Activated CD4-positive, alpha-beta T cell treated with anti-CD3 and anti-CD28 coated beads, Interleukin-2, amount 10 ng/mL, durations not matched to agents 24 days and 14 days (primary cell): ENCODE measurements at regions of chr6 and their contacts with region 1.

Region 1: DNA sequence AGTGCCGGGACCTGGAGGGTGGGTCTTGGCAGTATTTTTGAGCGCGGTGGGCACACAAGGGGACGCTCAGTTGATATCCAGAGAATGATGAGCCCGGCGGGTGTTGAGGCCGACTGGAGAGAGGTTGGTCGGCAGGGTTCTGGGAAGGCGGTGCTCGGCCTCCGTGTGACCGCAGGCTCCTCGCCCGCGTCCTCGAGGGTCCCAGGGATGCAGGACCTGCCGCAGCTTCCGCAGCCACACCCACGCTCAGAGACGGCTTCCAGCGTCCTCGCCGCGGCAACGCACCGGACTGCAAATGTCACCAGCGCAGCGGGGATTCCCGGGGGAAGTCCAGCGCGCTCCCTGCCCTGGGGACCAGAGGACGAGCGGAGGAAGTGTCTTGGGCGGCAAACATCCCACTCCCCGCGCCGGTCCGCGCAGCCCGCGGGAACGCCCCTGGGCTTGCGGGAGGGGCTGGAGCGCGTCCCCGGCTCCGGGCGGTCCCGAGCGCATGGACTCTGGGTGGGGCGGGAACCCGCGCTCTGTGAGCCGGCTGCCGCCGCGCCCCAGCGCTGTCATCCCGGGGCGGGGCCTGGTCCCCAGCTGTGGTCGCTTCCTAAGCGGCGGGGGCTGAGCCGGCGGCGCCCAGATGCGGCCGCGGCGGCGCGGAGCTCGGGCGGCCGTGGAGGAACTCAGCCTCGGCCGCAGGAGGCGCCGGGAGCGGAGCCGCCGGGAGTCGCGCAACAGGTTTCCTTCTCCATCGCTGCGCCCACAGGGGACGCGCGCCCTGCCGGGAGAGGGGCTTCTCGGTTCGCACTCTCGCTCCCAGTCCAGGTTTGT is at the start of gene STX11:
- DNase-seq: peak; percentile 95
- H3K4me3 Mint-ChIP-seq: peak within 1 kb of the TSS; percentile 89
- H3K27ac Mint-ChIP-seq: peak within 1 kb of the TSS; percentile 96
- H3K4me1 Mint-ChIP-seq: peaks cover 41% of the 10 kb centered on the region
- H3K27me3 Mint-ChIP-seq: no peaks in the 10 kb centered on the region
- total RNA-seq, gene STX11: 15.5 and 15.6 TPM in 2 replicates

Region 2: DNA sequence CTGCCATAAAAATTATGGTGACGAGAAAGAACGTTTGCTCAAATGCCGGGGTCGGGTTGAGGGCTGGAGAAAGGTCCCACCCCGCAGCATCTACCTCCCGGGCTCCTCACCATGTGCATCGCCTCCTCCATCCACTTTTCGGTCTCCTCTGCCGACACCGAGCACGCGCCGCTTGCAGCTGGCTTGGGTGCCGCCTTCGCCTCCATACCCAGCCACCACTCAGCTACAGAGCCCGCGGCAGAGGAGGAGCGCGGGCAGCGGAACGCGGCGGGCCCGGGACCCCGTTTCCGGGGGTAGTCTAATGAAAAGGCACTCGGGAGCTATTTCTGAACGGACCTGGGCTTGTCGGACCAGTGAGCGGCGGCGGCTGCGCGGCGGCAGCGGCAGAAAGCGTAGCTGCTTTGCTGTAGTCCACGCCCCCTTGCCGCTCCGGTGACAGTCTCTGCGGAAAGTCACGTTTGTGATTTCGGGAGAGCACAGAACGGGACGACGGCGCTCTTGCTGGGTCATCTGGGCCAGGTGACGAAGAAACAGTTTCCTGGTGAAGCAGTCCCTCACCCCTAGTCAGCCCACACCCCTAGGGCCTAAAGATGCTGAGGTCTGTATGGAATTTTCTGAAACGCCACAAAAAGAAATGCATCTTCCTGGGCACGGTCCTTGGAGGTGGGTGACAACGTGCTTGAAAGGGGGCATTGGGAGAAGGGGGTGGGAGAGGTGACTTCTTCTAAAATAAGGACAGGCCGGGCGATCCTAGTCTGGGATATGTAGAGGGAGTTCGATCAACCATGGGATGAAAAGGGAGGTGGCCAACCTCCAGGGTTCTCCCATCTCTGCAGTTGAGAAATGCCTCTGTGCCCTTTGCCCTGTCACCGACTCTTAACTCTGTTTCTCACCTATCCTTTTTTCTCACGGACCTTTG is 699.4 kb before region 1 on chr6 and contains the starts of genes ADAT2 and PEX3:
- intact Hi-C with region 1: loop called (anchors 5 kb)
- DNase-seq: peak; percentile 98
- H3K4me3 Mint-ChIP-seq: peak within 1 kb of the TSS; percentile 91
- H3K27ac Mint-ChIP-seq: peak within 1 kb of the TSS; percentile 99
- H3K4me1 Mint-ChIP-seq: peaks cover 36% of the 10 kb centered on the region
- H3K27me3 Mint-ChIP-seq: no peaks in the 10 kb centered on the region
- total RNA-seq, gene ADAT2: 46.0 and 47.7 TPM in 2 replicates
- total RNA-seq, gene PEX3: 26.0 and 28.5 TPM in 2 replicates

Region 3: GRCh38 chr6:143679041-143679440 is 471.1 kb before region 1 on chr6:
- intact Hi-C with region 1: no loop called
- DNase-seq: no peak
- H3K4me3 Mint-ChIP-seq: peak overlapping the region; percentile 84
- H3K27ac Mint-ChIP-seq: no peak overlapping the region
- H3K4me1 Mint-ChIP-seq: peaks cover 15% of the 10 kb centered on the region
- H3K27me3 Mint-ChIP-seq: peaks cover 46% of the 10 kb centered on the region

Region 4: DNA sequence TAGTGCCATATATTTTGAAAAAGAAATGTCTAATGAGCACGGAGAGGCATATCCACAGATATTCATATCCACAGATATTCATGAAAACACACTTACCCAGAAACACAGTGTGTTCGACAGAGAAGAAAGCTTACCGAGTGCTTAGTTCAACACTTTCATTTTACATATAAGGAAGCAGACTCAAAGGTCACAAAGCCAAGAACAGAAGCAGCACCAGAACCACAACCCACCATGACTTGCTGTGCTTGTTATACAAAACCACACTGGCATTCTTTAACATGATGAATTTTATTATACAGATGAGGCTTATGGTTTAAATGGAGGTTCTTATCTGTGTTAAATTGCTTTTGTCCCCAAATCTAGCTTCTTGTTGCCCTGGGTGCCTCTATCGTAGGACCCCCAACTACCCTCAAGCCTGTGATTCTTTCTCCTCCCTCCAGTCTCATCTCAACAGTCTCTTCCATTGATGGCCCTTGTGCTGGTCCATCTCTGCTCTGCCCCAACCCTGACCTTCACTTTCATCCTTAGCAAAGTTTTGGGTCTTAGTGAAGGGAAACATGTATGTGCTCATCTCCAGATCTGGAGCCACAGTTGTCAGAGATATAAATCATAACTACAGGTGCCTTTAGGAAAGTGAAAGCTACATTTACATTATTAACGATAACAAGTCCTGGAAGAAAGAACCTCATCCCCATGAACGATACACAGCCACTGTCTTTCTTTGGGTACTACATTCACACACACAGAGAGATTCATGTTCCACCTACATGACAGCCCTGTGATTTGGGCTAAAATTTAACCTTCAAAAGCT is 94.8 kb before region 1 on chr6:
- intact Hi-C with region 1: loop called (anchors 2 kb)
- DNase-seq: peak; percentile 86
- H3K4me3 Mint-ChIP-seq: peak overlapping the region; percentile 78
- H3K27ac Mint-ChIP-seq: peak overlapping the region; percentile 94
- H3K4me1 Mint-ChIP-seq: peaks cover 27% of the 10 kb centered on the region
- H3K27me3 Mint-ChIP-seq: no peaks in the 10 kb centered on the region

Region 5: GRCh38 chr6:144104898-144105487 is 45.1 kb before region 1 on chr6:
- intact Hi-C with region 1: loop called (anchors 2 kb)
- DNase-seq: peak; percentile 87
- H3K4me3 Mint-ChIP-seq: no peak overlapping the region
- H3K27ac Mint-ChIP-seq: no peak overlapping the region
- H3K4me1 Mint-ChIP-seq: peaks cover 7% of the 10 kb centered on the region
- H3K27me3 Mint-ChIP-seq: peaks cover 6% of the 10 kb centered on the region

Region 6: GRCh38 chr6:144123836-144124235 is 26.3 kb before region 1 on chr6:
- intact Hi-C with region 1: no loop called
- DNase-seq: no peak
- H3K4me3 Mint-ChIP-seq: no peak overlapping the region
- H3K27ac Mint-ChIP-seq: no peak overlapping the region
- H3K4me1 Mint-ChIP-seq: no peaks in the 10 kb centered on the region
- H3K27me3 Mint-ChIP-seq: peaks cover 6% of the 10 kb centered on the region

Region 7: GRCh38 chr6:144181639-144182038 is 31.5 kb after region 1 on chr6:
- intact Hi-C with region 1: loop called (anchors 1 kb)
- DNase-seq: no peak
- H3K4me3 Mint-ChIP-seq: no peak overlapping the region
- H3K27ac Mint-ChIP-seq: no peak overlapping the region
- H3K4me1 Mint-ChIP-seq: peaks cover 43% of the 10 kb centered on the region
- H3K27me3 Mint-ChIP-seq: no peaks in the 10 kb centered on the region

Region 8: DNA sequence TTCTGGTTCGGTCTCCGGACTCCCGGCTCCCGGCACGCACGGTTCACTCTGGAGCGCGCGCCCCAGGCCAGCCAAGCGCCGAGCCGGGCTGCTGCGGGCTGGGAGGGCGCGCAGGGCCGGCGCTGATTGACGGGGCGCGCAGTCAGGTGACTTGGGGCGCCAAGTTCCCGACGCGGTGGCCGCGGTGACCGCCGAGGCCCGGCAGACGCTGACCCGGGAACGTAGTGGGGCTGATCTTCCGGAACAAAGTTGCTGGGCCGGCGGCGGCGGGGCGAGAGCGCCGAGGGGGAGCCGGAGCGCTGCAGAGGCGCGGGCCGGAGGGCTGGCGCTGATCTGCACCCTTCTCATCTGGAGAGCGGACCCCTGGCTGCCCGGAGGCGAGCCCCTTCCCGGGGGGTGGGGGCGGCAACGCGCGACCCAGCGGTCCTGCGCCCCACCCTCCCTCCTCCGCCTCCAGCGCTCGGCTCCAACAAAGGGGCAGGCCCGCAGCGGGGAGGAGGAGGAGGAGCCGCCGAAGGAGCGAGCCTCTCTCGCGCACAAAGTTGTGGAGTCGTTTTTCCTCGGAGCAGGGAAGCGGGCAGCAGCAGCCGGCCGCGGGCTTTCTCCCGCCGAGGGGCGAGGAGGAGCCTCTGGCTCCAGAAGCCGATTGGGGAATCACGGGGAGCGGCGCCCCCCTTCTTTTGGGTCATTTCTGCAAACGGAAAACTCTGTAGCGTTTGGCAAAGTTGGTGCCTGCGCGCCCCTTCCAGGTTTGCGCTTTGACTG is 134.9 kb after region 1 on chr6 and contains the start of gene UTRN:
- intact Hi-C with region 1: loop called (anchors 1 kb)
- DNase-seq: peak; percentile 84
- H3K4me3 Mint-ChIP-seq: peak within 1 kb of the TSS; percentile 91
- H3K27ac Mint-ChIP-seq: peak within 1 kb of the TSS; percentile 88
- H3K4me1 Mint-ChIP-seq: peaks cover 16% of the 10 kb centered on the region
- H3K27me3 Mint-ChIP-seq: peaks cover 39% of the 10 kb centered on the region
- total RNA-seq, gene UTRN: 36.7 and 45.1 TPM in 2 replicates

Region 9: GRCh38 chr6:145734486-145735355 is 1584.6 kb after region 1 on chr6:
- intact Hi-C with region 1: loop called (anchors 10 kb)
- DNase-seq: peak; percentile 91
- H3K4me3 Mint-ChIP-seq: peak overlapping the region; percentile 92
- H3K27ac Mint-ChIP-seq: peak overlapping the region; percentile 98
- H3K4me1 Mint-ChIP-seq: peaks cover 14% of the 10 kb centered on the region
- H3K27me3 Mint-ChIP-seq: no peaks in the 10 kb centered on the region